Panc1 (cell line): ENCODE measurements at regions of chr20 and their contacts with region 1.

Region 1: DNA sequence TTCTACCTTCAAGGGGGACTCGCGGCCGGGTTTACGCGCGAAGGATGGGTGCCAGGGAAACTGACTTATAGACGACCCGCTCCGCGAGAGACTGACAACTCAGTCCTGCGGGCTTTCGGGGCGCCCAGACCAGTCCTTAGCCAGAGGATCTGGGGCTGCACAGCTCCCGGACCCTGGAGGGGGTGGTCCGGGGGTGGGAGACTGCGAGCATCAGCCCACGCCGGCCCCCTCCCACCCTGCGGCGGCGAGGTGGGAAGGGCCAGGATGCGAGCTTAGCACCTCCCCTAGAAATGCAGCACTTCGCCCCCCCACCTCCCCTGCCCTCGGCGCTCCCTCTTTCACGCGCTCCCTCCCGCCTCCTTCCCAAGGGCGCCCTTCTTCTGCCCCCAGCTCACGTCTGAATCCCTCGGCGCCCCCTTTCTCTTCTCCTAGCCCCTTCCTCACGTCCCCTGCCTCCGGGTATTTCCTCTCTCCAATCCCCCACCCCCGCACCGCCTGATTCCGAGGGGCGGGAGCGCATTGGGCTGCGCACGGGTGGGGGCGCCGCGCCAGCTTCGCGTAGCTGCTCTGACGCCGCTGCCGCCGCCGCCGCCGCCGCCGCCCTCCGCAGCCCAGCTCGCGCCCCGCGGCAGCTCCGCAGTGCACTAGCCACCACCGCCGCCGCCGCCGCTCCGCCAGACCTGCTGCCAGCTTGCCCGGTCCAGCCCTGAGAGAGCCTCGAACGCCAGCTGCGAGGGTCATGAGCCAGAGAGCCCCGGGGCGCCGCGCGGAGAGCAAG is at the start of gene SLC32A1:
- DNase-seq: no peak
- ATAC-seq: no peak
- H3K4me3 ChIP-seq: no peak within 1 kb of the TSS
- H3K27ac ChIP-seq: no peak within 1 kb of the TSS
- H3K4me1 ChIP-seq: no peaks in the 10 kb centered on the region; the same call in 1 of the 2 replicates
- H3K27me3 ChIP-seq: peaks cover 20% of the 10 kb centered on the region
- CTCF ChIP-seq: no peak
- total RNA-seq, gene SLC32A1: not detected

Region 2: DNA sequence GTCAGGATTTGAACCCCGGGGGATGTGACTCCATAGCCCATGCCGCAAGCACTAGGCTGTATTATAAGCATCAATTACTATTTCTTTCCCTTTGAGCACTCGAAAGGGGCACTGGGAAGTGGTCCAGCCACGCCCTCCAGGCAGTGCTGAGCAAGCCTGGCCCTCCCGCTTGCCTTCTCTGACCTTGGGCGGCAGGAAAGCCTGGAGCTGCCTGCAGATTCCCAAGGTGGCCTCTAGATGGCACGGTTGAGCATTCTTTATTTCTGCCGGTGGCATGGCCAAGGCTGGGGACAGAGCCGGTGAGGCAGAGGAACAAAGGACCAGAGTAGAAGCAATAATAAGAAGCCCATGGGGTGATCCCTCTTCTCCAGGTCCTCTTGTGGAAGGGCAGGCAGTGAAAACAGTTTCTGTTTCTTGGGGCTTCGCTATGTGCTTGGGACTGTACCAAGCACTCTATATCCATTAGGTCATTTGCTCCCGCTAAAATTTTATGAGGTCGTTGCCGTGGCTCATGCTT is 90.4 kb before region 1 on chr20:
- CTCF ChIA-PET with region 1: no interaction called
- POLR2A ChIA-PET with region 1: no interaction called
- in situ Hi-C with region 1: no loop called
- intact Hi-C with region 1: no loop called
- DNase-seq: no peak
- ATAC-seq: peak; percentile 92
- H3K4me3 ChIP-seq: no peak overlapping the region
- H3K27ac ChIP-seq: no peak overlapping the region
- H3K4me1 ChIP-seq: no peaks in the 10 kb centered on the region
- H3K27me3 ChIP-seq: no peaks in the 10 kb centered on the region
- CTCF ChIP-seq: peak; percentile 96

Region 3: GRCh38 chr20:38748097-38748860 is 24.2 kb after region 1 on chr20 and contains the start of gene ACTR5:
- CTCF ChIA-PET with region 1: interaction called, 5 read pairs
- POLR2A ChIA-PET with region 1: interaction called, 10 read pairs
- in situ Hi-C with region 1: no loop called
- intact Hi-C with region 1: no loop called
- DNase-seq: peak; percentile 72
- ATAC-seq: peak; percentile 96
- H3K4me3 ChIP-seq: peak within 1 kb of the TSS; percentile 90 to 95
- H3K27ac ChIP-seq: peak within 1 kb of the TSS; percentile 84
- H3K4me1 ChIP-seq: peaks cover 14% of the 10 kb centered on the region
- H3K27me3 ChIP-seq: no peaks in the 10 kb centered on the region
- CTCF ChIP-seq: no peak
- total RNA-seq, gene ACTR5: 12.1 TPM